Mammary epithelial cell (primary cell): ENCODE measurements at regions of chr6 and their contacts with region 1.

Region 1: DNA sequence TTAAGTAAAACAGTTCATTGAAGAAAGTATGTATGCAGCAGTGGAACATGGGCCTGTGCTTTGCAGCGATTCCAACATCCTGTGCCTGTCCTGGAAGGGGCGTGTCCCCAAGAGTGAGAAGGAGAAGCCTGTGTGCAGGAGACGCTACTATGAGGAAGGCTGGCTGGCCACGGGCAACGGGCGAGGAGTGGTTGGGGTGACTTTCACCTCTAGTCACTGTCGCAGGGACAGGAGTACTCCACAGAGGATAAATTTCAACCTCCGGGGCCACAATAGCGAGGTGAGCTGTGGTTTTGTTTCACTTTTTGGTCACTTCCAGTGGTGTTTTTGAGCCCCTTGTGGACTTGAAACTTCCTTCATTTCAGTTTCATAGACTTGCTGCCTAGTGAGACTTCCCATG is 1.7 kb downstream of the TULP4 start:
- DNase-seq: no peak
- H3K4me3 ChIP-seq: no peak overlapping the region
- H3K27ac ChIP-seq: no peak overlapping the region
- H3K4me1 ChIP-seq: peaks cover 13% of the 10 kb centered on the region
- H3K27me3 ChIP-seq: no peaks in the 10 kb centered on the region
- CTCF ChIP-seq: no peak

Region 2: GRCh38 chr6:157019733-157020132 is 1294.3 kb before region 1 on chr6:
- CTCF ChIA-PET with region 1: no interaction called
- dilution Hi-C with region 1: no loop called
- in situ Hi-C with region 1: no loop called
- intact Hi-C with region 1: no loop called
- DNase-seq: no peak
- H3K4me3 ChIP-seq: no peak overlapping the region
- H3K27ac ChIP-seq: no peak overlapping the region
- H3K4me1 ChIP-seq: peaks cover 16% of the 10 kb centered on the region
- H3K27me3 ChIP-seq: no peaks in the 10 kb centered on the region
- CTCF ChIP-seq: no peak

Region 3: GRCh38 chr6:158270389-158271127 is 43.4 kb before region 1 on chr6:
- CTCF ChIA-PET with region 1: no interaction called
- dilution Hi-C with region 1: loop called (anchors 5 kb)
- in situ Hi-C with region 1: no loop called
- intact Hi-C with region 1: no loop called
- DNase-seq: no peak
- H3K4me3 ChIP-seq: no peak overlapping the region
- H3K27ac ChIP-seq: no peak overlapping the region
- H3K4me1 ChIP-seq: no peaks in the 10 kb centered on the region
- H3K27me3 ChIP-seq: no peaks in the 10 kb centered on the region
- CTCF ChIP-seq: no peak